HepG2 (cell line): ENCODE measurements at regions of chr2 and their contacts with region 1.

Region 1: GRCh38 chr2:188524519-188525113 is 232.9 kb downstream of the GULP1 start:
- DNase-seq: peak; percentile 53
- ATAC-seq: peak; percentile 62; the same call in 2 of the 3 replicates
- H3K4me3 ChIP-seq: no peak overlapping the region
- H3K27ac ChIP-seq: no peak overlapping the region
- H3K4me1 ChIP-seq: no peaks in the 10 kb centered on the region
- H3K27me3 ChIP-seq: no peaks in the 10 kb centered on the region
- CTCF ChIP-seq: peak; percentile 63
- EP300 ChIP-seq: no peak
- POLR2A ChIP-seq: no peak
- RAD21 ChIP-seq: no peak; the same call in 1 of the 2 replicates

Region 2: DNA sequence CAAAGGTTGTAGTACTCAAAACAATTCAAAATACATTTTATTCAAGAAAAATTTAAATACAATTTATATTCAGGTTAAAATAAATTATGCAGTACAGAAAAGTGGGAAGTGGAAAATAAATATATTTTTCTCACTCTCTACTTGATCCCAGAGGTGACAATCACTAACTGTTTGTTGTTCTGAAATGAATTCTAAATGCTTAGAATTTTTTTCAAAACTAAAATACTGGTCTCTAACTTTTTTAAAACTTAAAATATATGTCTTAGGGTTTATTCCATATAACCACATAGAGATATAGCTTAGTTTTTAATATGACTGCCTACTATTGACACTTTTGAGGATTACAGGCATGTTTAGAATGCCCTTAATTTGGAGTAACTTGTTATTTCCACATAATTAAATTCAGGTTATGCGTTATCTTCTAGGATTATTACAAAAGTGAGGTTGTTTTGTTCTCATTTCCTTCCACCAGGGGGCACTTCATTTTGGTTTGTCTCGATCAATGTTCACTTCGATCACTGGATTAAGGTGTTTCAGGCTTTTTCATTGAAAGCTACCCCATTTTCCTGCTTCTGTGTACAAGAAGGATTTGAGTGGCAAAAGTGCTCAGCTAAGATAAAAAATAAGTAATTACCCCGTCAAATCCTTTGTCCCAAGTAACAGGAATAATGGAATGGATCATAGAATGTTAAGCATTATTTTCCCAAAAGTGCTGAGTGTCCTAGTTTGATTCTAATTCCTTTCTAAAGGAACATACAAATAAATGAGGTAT is 943.3 kb before region 1 on chr2:
- CTCF ChIA-PET with region 1: no interaction called
- POLR2A ChIA-PET with region 1: no interaction called
- in situ Hi-C with region 1: loop called (anchors 25 kb)
- intact Hi-C with region 1: no loop called
- DNase-seq: peak; percentile 59
- ATAC-seq: peak; percentile 18; the same call in 1 of the 3 replicates
- H3K4me3 ChIP-seq: peak overlapping the region; percentile 21 to 60 (median 51); a peak in 5 of 6 replicates
- H3K27ac ChIP-seq: no peak overlapping the region
- H3K4me1 ChIP-seq: peaks cover 33% of the 10 kb centered on the region
- H3K27me3 ChIP-seq: no peaks in the 10 kb centered on the region
- CTCF ChIP-seq: peak; percentile 79
- EP300 ChIP-seq: no peak
- POLR2A ChIP-seq: no peak
- RAD21 ChIP-seq: no peak; the same call in 1 of the 2 replicates

Region 3: DNA sequence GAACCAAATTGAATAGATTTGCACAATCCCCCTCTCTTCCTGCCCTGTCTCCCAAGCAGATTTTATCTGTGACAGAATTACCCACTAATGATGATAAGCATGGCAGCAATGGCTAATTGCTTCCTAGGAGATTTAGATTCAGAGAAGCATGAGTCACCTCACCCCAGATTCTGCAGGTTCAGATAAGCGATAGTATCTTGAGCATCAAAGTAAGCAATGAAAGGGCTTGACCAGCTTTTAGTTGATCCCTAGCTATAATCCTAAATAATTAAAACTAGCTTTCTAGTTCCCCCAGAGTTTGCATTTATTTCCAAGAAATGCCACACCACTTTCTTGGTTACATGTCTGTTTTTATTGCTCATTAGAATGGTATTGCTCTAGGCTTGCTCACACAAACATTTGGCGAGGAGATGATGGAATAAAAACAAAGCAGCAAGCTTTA is 28.6 kb before region 1 on chr2:
- CTCF ChIA-PET with region 1: no interaction called
- POLR2A ChIA-PET with region 1: no interaction called
- in situ Hi-C with region 1: no loop called
- intact Hi-C with region 1: no loop called
- DNase-seq: no peak
- ATAC-seq: no peak
- H3K4me3 ChIP-seq: no peak overlapping the region
- H3K27ac ChIP-seq: no peak overlapping the region
- H3K4me1 ChIP-seq: no peaks in the 10 kb centered on the region
- H3K27me3 ChIP-seq: no peaks in the 10 kb centered on the region
- CTCF ChIP-seq: no peak
- EP300 ChIP-seq: no peak
- POLR2A ChIP-seq: no peak
- RAD21 ChIP-seq: no peak

Region 4: DNA sequence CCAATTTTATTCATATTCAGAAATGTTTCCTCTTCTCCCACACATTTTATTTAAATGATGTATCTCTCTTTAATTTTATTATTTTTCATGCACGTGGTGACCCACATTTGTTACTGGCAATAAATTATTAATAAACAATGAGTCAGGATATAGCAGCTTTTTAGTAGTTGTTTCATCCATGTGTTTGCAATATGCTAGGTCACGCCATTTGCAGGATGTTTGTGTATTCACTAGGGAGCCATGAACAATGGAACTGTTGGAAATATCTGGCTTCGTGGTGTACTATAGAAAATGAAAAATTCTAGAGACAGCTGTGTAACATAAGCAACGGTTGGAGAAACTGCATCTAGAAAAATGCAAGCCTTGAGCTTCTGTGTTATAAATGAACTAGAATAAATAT is 273.5 kb after region 1 on chr2:
- CTCF ChIA-PET with region 1: no interaction called
- POLR2A ChIA-PET with region 1: no interaction called
- in situ Hi-C with region 1: no loop called
- intact Hi-C with region 1: no loop called
- DNase-seq: no peak
- ATAC-seq: no peak
- H3K4me3 ChIP-seq: no peak overlapping the region
- H3K27ac ChIP-seq: no peak overlapping the region
- H3K4me1 ChIP-seq: no peaks in the 10 kb centered on the region
- H3K27me3 ChIP-seq: no peaks in the 10 kb centered on the region
- CTCF ChIP-seq: no peak
- EP300 ChIP-seq: no peak
- POLR2A ChIP-seq: no peak
- RAD21 ChIP-seq: no peak

Region 5: GRCh38 chr2:188978291-188979081 is 453.9 kb after region 1 on chr2:
- CTCF ChIA-PET with region 1: interaction called, 8 read pairs
- POLR2A ChIA-PET with region 1: no interaction called
- in situ Hi-C with region 1: loop called (anchors 5 kb)
- intact Hi-C with region 1: loop called (anchors 1 kb)
- DNase-seq: peak; percentile 43
- ATAC-seq: peak; percentile 96
- H3K4me3 ChIP-seq: no peak overlapping the region
- H3K27ac ChIP-seq: no peak overlapping the region
- H3K4me1 ChIP-seq: no peaks in the 10 kb centered on the region
- H3K27me3 ChIP-seq: no peaks in the 10 kb centered on the region
- CTCF ChIP-seq: peak; percentile 66
- EP300 ChIP-seq: no peak
- POLR2A ChIP-seq: no peak
- RAD21 ChIP-seq: no peak

Region 6: GRCh38 chr2:189096769-189097447 is 572.3 kb after region 1 on chr2:
- CTCF ChIA-PET with region 1: no interaction called
- POLR2A ChIA-PET with region 1: no interaction called
- in situ Hi-C with region 1: no loop called
- intact Hi-C with region 1: loop called (anchors 1 kb)
- DNase-seq: peak; percentile 47
- ATAC-seq: no peak
- H3K4me3 ChIP-seq: no peak overlapping the region
- H3K27ac ChIP-seq: no peak overlapping the region
- H3K4me1 ChIP-seq: no peaks in the 10 kb centered on the region
- H3K27me3 ChIP-seq: no peaks in the 10 kb centered on the region
- CTCF ChIP-seq: no peak
- EP300 ChIP-seq: no peak
- POLR2A ChIP-seq: no peak
- RAD21 ChIP-seq: no peak

Region 7: DNA sequence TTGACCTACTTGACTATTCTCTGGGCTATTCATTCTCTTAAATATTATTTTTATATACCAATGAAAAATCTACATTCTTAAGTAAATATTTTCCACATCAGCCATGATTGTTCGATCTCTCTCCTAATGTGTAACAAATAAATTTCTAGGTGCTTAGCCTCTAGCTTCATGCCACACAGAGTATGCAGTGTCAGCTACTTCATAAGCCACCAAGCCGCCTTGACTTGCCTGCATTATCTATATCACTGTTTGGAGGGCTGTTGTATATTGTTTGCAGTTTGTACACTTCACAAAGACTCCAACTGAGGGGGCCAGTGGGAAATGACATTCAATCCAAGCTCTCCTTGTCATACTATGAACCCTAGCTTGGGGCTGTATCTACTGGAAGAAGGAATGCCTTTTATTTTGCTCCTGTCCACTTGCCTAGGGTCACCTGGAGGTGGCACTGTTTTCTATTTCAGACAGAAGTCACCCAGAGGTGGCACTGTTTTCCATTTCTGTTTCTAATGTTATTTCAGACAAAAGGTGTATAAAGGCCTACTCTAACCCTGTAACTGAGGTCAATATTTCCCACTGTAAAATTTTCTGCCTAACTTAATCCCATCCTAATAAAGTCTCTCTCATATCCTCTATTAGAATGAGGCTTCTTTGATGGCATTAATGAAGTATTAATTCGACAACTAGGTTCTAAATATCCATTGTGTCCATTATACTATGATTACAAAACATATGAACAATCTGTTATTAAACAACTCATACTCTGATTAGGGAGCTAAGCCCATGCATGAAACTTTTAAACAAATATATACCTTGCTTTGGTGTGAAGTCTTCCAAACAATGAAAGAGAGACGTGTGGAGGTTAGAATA is 618.5 kb after region 1 on chr2:
- CTCF ChIA-PET with region 1: interaction called, 4 read pairs
- POLR2A ChIA-PET with region 1: no interaction called
- in situ Hi-C with region 1: no loop called
- intact Hi-C with region 1: loop called (anchors 1 kb)
- DNase-seq: peak; percentile 76
- ATAC-seq: peak; percentile 100
- H3K4me3 ChIP-seq: no peak overlapping the region
- H3K27ac ChIP-seq: no peak overlapping the region
- H3K4me1 ChIP-seq: no peaks in the 10 kb centered on the region
- H3K27me3 ChIP-seq: no peaks in the 10 kb centered on the region
- CTCF ChIP-seq: peak; percentile 87
- EP300 ChIP-seq: no peak
- POLR2A ChIP-seq: no peak
- RAD21 ChIP-seq: peak; percentile 79

Region 8: DNA sequence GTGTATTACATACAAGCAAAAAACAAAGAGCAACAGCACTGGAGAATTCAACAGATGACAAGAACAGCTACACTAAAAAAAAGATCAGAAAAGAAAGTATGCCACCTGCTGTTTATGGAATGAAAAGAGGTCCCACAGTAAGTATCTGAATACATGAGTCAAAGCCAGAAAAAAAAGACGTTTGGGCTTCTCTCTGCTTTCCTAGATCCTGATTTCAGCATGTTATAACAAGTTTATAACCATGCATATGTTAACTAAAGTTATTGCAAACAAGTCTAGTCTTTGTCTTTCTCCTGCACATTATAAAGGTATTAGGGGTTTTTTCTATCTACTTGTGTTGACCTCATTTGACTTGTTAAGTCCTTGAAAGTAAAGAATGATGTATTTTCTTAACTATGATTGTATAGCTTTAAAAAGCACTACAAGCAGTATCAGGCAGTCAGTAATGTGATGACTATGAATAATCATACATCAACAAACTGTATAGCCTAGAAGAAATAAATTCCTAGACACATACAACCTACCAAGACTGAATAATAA is 763.4 kb after region 1 on chr2:
- CTCF ChIA-PET with region 1: interaction called, 12 read pairs
- POLR2A ChIA-PET with region 1: no interaction called
- in situ Hi-C with region 1: loop called (anchors 10 kb)
- intact Hi-C with region 1: loop called (anchors 1 kb)
- DNase-seq: peak; percentile 49
- ATAC-seq: peak; percentile 72
- H3K4me3 ChIP-seq: no peak overlapping the region
- H3K27ac ChIP-seq: no peak overlapping the region
- H3K4me1 ChIP-seq: no peaks in the 10 kb centered on the region
- H3K27me3 ChIP-seq: no peaks in the 10 kb centered on the region
- CTCF ChIP-seq: peak; percentile 59
- EP300 ChIP-seq: no peak
- POLR2A ChIP-seq: no peak
- RAD21 ChIP-seq: peak; percentile 36; the same call in 1 of the 2 replicates

Region 9: GRCh38 chr2:189309331-189309730 is 784.7 kb after region 1 on chr2:
- CTCF ChIA-PET with region 1: no interaction called
- POLR2A ChIA-PET with region 1: no interaction called
- in situ Hi-C with region 1: no loop called
- intact Hi-C with region 1: loop called (anchors 1 kb)
- DNase-seq: no peak
- ATAC-seq: no peak
- H3K4me3 ChIP-seq: no peak overlapping the region
- H3K27ac ChIP-seq: no peak overlapping the region
- H3K4me1 ChIP-seq: peaks cover 8% of the 10 kb centered on the region
- H3K27me3 ChIP-seq: no peaks in the 10 kb centered on the region; a peak in 1 of 5 replicates
- CTCF ChIP-seq: no peak
- EP300 ChIP-seq: no peak
- POLR2A ChIP-seq: no peak
- RAD21 ChIP-seq: no peak

Region 10: GRCh38 chr2:189874586-189875320 is 1350.1 kb after region 1 on chr2:
- CTCF ChIA-PET with region 1: no interaction called
- POLR2A ChIA-PET with region 1: no interaction called
- in situ Hi-C with region 1: no loop called
- intact Hi-C with region 1: no loop called
- DNase-seq: no peak
- ATAC-seq: no peak
- H3K4me3 ChIP-seq: no peak overlapping the region
- H3K27ac ChIP-seq: no peak overlapping the region
- H3K4me1 ChIP-seq: no peaks in the 10 kb centered on the region
- H3K27me3 ChIP-seq: no peaks in the 10 kb centered on the region
- CTCF ChIP-seq: no peak
- EP300 ChIP-seq: no peak
- POLR2A ChIP-seq: no peak
- RAD21 ChIP-seq: no peak